ENCODE measurements at regions of chr15 and their contacts with region 1.

Region 1: GRCh38 chr15:74545880-74546656 is 5.0 kb downstream of the ARID3B start:
- DNase-seq: peak; percentile 99
- H3K4me3 ChIP-seq: no peak overlapping the region
- H3K27ac ChIP-seq: no peak overlapping the region
- H3K4me1 ChIP-seq: peaks cover 30% of the 10 kb centered on the region
- H3K27me3 ChIP-seq: no peaks in the 10 kb centered on the region
- CTCF ChIP-seq: peak in 1 of 2 donors; percentile 35

Region 2: DNA sequence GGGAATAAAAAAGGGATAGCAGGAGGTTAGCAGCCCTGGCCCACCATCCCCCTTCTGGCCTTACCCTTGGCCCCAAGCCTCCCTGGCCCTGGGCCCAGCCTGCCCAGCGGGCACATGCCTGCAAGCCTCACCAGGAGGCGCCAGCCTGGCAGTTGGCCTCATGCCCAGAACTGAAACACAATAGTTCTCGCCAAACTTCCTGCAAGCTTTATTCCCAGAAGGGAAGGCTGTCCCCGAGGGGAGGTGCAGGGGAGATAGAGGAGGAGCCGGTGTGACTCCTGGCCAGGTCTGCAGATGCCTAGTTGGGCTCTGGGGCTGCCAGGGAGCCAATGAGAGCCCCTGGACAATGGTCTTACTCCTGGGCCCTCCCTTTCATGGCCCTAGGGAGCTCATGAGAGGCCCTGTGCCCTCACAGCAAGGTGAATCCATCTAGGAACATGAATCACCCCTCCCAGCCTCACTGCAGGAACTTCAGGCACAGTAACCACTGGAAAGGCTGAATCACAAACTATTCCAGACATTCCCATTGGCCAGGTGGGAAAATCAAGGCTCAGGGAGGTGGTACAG is 306.0 kb before region 1 on chr15:
- CTCF ChIA-PET with region 1: no interaction called
- dilution Hi-C with region 1: no loop called
- in situ Hi-C with region 1: no loop called
- intact Hi-C with region 1: no loop called
- DNase-seq: peak; percentile 91
- H3K4me3 ChIP-seq: no peak overlapping the region
- H3K27ac ChIP-seq: no peak overlapping the region
- H3K4me1 ChIP-seq: peaks cover 30% of the 10 kb centered on the region
- H3K27me3 ChIP-seq: no peaks in the 10 kb centered on the region
- CTCF ChIP-seq: peak; percentile 51 to 63

Region 3: GRCh38 chr15:74382004-74382816 is 163.9 kb before region 1 on chr15:
- CTCF ChIA-PET with region 1: no interaction called
- dilution Hi-C with region 1: no loop called
- in situ Hi-C with region 1: loop called in 1 of 2 experiments (anchors 10 kb)
- intact Hi-C with region 1: loop called (anchors 1 kb)
- DNase-seq: peak; percentile 86
- H3K4me3 ChIP-seq: no peak overlapping the region
- H3K27ac ChIP-seq: peak overlapping the region; percentile 95
- H3K4me1 ChIP-seq: peaks cover 68% of the 10 kb centered on the region
- H3K27me3 ChIP-seq: no peaks in the 10 kb centered on the region
- CTCF ChIP-seq: peak; percentile 83 to 98

Region 4: GRCh38 chr15:74453925-74454763 is 91.9 kb before region 1 on chr15:
- CTCF ChIA-PET with region 1: no interaction called
- dilution Hi-C with region 1: loop called (anchors 5 kb)
- in situ Hi-C with region 1: no loop called
- intact Hi-C with region 1: no loop called
- DNase-seq: no peak
- H3K4me3 ChIP-seq: no peak overlapping the region
- H3K27ac ChIP-seq: no peak overlapping the region
- H3K4me1 ChIP-seq: no peaks in the 10 kb centered on the region
- H3K27me3 ChIP-seq: no peaks in the 10 kb centered on the region
- CTCF ChIP-seq: no peak

Region 5: DNA sequence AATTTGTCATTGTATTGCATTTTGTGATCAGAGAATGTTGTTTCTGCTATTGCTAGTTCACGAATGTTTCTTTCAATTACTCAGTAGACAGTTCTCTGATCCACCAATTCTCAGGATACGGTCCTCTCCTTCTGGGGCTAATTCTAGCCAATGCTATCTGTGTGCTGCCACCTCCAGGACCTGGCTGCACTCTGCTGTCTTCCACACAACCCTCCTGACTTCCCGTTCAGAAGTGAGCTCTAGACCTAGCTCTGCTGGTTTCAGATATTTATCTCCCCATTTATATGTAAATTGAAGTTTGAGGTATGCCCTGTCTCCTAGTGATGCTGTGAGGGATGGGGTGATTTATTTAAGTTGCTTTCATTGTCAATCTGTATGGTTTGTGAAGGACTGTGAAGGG is 63.4 kb before region 1 on chr15:
- CTCF ChIA-PET with region 1: interaction called, 10 read pairs
- dilution Hi-C with region 1: no loop called
- in situ Hi-C with region 1: no loop called
- intact Hi-C with region 1: no loop called
- DNase-seq: no peak
- H3K4me3 ChIP-seq: no peak overlapping the region
- H3K27ac ChIP-seq: no peak overlapping the region
- H3K4me1 ChIP-seq: no peaks in the 10 kb centered on the region
- H3K27me3 ChIP-seq: no peaks in the 10 kb centered on the region
- CTCF ChIP-seq: no peak

Region 6: DNA sequence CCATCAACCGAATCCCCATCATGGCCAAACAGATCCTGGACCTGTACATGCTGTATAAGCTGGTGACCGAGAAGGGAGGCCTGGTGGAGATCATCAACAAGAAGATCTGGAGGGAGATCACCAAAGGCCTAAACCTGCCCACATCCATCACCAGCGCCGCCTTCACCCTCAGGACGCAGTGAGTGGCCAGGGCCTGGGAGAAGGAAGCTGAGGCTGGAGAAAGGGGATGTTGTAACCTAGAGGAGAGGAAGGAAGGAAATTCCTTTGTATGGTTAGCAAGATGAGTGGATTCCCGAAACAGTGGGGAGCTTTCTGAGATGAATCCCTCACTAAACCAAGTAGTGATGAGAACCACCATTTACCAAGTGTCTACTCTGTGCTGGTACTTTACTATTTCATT is 43.8 kb after region 1 on chr15:
- CTCF ChIA-PET with region 1: no interaction called
- dilution Hi-C with region 1: no loop called
- in situ Hi-C with region 1: no loop called
- intact Hi-C with region 1: loop called (anchors 2 kb)
- DNase-seq: no peak
- H3K4me3 ChIP-seq: no peak overlapping the region
- H3K27ac ChIP-seq: peak overlapping the region; percentile 60
- H3K4me1 ChIP-seq: peaks cover 18% of the 10 kb centered on the region
- H3K27me3 ChIP-seq: no peaks in the 10 kb centered on the region
- CTCF ChIP-seq: no peak

Region 7: GRCh38 chr15:74620636-74621545 is 74.8 kb after region 1 on chr15:
- CTCF ChIA-PET with region 1: interaction called, 3 read pairs
- dilution Hi-C with region 1: no loop called
- in situ Hi-C with region 1: loop called in 1 of 2 experiments (anchors 5 kb)
- intact Hi-C with region 1: no loop called
- DNase-seq: peak; percentile 73
- H3K4me3 ChIP-seq: no peak overlapping the region
- H3K27ac ChIP-seq: no peak overlapping the region
- H3K4me1 ChIP-seq: peaks cover 30% of the 10 kb centered on the region
- H3K27me3 ChIP-seq: no peaks in the 10 kb centered on the region
- CTCF ChIP-seq: peak; percentile 99 to 100

Region 8: DNA sequence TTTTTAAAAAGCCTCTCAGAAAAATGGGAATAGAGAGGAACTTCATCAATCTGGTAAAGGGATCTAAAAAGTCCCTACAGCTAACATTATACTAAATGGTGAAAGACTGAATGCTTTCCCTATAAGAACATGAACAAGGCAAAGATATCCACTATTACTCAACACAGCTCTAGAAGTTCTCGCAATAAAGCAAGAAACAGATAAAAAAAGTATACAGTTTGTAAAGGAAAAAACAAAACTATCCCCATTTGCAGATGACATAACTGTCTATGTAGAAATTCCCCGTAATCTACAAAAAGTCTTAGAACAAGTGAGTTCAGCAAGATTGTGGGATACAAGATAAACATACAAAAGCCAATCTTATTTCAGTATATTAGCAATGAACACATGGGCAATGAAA is 134.4 kb after region 1 on chr15:
- CTCF ChIA-PET with region 1: no interaction called
- dilution Hi-C with region 1: no loop called
- in situ Hi-C with region 1: no loop called
- intact Hi-C with region 1: no loop called
- DNase-seq: no peak
- H3K4me3 ChIP-seq: no peak overlapping the region
- H3K27ac ChIP-seq: no peak overlapping the region
- H3K4me1 ChIP-seq: no peaks in the 10 kb centered on the region
- H3K27me3 ChIP-seq: no peaks in the 10 kb centered on the region
- CTCF ChIP-seq: no peak

Measured in mammary epithelial cell (primary cell).